Activated naive CD4-positive, alpha-beta T cell treated with anti-CD3 and anti-CD28 coated beads for 36 hours (primary cell): ENCODE measurements at regions of chr7 and their contacts with region 1.

Region 1: GRCh38 chr7:129906700-129907099 is 46.1 kb downstream of the UBE2H start:
- DNase-seq: no peak
- H3K4me3 Mint-ChIP-seq: no peak overlapping the region
- H3K27ac Mint-ChIP-seq: peak overlapping the region; percentile 76
- H3K4me1 Mint-ChIP-seq: peaks cover 75% of the 10 kb centered on the region
- H3K27me3 Mint-ChIP-seq: no peaks in the 10 kb centered on the region

Region 2: GRCh38 chr7:129845178-129845971 is 61.3 kb before region 1 on chr7:
- CTCF ChIA-PET with region 1: no interaction called
- intact Hi-C with region 1: loop called (anchors 5 kb)
- DNase-seq: no peak
- H3K4me3 Mint-ChIP-seq: no peak overlapping the region
- H3K27ac Mint-ChIP-seq: peak overlapping the region; percentile 22
- H3K4me1 Mint-ChIP-seq: peaks cover 50% of the 10 kb centered on the region
- H3K27me3 Mint-ChIP-seq: no peaks in the 10 kb centered on the region

Region 3: DNA sequence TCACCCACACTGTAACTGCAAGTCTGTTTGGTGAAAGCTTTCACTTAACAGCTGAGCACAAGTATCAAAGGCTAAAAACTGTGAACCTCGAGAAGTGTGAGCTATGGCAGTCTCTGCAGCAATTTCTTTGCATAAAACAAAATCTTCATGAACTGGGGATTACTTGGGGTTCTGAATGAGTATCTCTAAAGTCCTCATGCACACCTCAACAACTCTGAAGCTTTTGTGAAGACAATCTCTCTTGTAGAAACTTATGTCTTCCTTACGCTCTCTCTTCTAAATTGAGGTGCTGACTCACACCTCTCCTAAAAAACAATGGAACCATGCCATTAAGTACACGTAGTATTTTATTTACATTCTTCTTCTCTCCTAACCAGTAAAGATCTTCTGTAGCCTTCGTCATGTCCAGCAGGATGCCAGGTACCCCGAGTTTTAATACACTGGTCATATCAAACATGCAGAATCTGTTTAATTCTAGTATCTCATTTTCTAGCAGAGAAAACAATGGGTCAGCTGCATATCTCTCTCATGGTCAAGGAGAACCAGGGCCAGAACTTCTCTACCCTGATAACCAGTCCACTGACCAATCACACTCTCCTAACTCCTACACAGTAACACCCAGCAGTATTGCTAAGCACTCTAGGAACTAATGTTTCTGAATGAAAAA is 30.8 kb before region 1 on chr7:
- CTCF ChIA-PET with region 1: interaction called, 3 read pairs
- intact Hi-C with region 1: loop called (anchors 2 kb)
- DNase-seq: no peak
- H3K4me3 Mint-ChIP-seq: no peak overlapping the region
- H3K27ac Mint-ChIP-seq: no peak overlapping the region
- H3K4me1 Mint-ChIP-seq: peaks cover 48% of the 10 kb centered on the region
- H3K27me3 Mint-ChIP-seq: no peaks in the 10 kb centered on the region

Region 4: DNA sequence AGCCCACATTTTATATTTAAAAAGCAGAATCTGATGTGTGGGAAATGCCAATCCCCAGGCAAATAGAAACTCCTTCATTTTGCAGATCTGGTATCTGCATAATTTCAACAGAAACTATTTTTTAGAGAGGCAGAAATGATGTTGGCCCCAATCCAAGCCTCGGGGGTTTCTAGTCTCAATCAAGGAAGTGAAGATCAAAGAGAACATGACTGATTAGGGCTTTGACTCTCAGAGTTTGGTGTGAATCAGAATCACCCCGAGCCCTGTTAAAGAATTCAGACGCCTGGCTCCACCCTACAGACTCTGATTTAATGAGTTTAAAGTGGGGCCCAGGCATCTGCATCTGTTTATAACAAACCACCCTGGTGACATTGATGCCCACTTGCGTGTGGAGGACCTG is 82.8 kb after region 1 on chr7:
- CTCF ChIA-PET with region 1: no interaction called
- intact Hi-C with region 1: loop called (anchors 5 kb)
- DNase-seq: peak; percentile 90
- H3K4me3 Mint-ChIP-seq: no peak overlapping the region
- H3K27ac Mint-ChIP-seq: no peak overlapping the region
- H3K4me1 Mint-ChIP-seq: peaks cover 13% of the 10 kb centered on the region
- H3K27me3 Mint-ChIP-seq: no peaks in the 10 kb centered on the region